ENCODE measurements at regions of chr4 and their contacts with region 1.

Region 1: GRCh38 chr4:124304941-124305340 is 407.6 kb downstream of the ANKRD50 start:
- DNase-seq: no peak
- H3K4me3 ChIP-seq: no peak overlapping the region
- CTCF ChIP-seq: no peak
- POLR2A ChIP-seq: no peak

Region 2: DNA sequence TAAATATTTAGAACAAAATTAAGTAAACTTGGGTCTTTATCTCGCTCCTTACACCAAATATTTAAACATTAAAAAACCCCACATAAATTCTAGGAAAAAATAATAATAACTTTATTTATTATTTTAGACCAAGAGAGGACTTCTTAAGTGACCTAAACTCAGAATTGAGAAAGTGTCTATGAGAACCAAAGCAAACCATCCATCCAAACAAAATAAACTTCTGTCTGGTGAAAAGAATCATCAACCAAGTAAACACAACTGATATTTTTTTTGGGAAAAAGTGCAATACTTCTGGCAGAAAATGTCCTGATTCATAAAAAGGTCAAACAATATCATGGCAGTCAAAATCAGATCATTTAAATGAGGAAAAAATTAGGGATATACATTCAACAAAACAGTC is 375.4 kb before region 1 on chr4:
- intact Hi-C with region 1: loop called (anchors 5 kb)
- DNase-seq: no peak
- H3K4me3 ChIP-seq: no peak overlapping the region
- CTCF ChIP-seq: no peak
- POLR2A ChIP-seq: no peak

Region 3: GRCh38 chr4:124409044-124409443 is 104.1 kb after region 1 on chr4:
- intact Hi-C with region 1: no loop called
- DNase-seq: no peak
- H3K4me3 ChIP-seq: no peak overlapping the region
- CTCF ChIP-seq: no peak
- POLR2A ChIP-seq: no peak

Region 4: GRCh38 chr4:124537971-124538370 is 233.0 kb after region 1 on chr4:
- intact Hi-C with region 1: no loop called
- DNase-seq: no peak
- H3K4me3 ChIP-seq: no peak overlapping the region
- CTCF ChIP-seq: no peak
- POLR2A ChIP-seq: no peak

Region 5: DNA sequence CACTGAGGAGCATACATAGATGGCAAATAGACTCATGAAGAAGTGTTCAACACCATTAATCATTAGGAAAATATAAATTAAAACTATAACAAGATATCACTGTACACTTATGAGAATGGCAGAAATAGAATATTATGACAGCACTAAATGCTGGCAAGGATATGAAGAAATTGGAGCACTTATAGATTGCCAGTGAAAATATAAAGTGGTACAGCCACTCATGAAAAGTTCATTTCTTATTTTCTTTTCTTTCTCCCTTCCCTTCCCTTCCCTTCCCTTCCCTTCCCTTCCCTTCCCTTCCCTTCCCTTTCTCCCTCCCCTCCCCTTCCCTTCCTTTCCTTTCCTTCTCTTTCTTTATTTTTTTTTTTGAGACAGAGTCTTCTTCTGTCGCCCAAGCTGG is 353.9 kb after region 1 on chr4:
- intact Hi-C with region 1: no loop called
- DNase-seq: no peak
- H3K4me3 ChIP-seq: no peak overlapping the region
- CTCF ChIP-seq: no peak
- POLR2A ChIP-seq: no peak

Region 6: DNA sequence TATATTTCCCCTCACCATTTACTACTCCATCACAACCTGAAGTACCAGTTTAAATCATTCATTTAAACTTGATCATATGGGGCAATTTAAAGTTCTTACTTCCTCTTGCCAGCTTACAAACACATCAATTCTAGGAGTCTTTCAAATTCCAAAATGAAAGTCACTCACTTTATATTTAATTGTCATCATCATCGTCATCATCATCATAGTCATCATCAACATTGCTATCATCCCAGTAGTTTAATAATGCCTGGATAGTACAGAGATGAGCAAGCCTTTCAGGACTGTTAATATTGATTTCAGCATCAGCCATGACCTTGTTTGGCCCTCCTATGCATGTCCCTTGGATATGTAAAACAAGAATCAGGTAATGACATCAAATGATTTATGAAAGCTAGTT is 1597.5 kb after region 1 on chr4:
- intact Hi-C with region 1: no loop called
- DNase-seq: no peak
- H3K4me3 ChIP-seq: no peak overlapping the region
- CTCF ChIP-seq: no peak
- POLR2A ChIP-seq: no peak